H1 (cell line): ENCODE measurements at regions of chr2 and their contacts with region 1.

Region 1: DNA sequence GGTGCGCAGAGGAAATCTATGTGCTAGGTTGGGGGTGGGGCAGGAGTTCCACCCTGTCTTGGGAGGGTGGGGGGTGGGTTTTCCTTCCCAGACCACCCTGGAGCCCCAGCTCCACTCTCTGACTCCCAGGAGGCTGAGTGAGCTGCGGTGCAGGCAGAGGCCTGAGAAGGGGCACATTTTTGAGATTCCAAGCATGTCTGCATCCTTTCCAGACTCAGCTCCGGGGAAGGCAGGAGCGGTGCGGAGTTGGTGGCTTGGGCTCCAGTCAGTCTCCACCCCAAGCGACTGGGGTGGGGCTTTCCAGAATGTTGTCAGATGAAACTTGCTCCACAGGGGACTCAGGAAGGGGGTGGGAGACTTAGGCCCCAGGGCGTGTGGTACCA is 44.2 kb upstream of the HS6ST1 start:
- DNase-seq: peak; percentile 70 to 84
- H3K4me3 ChIP-seq: no peak overlapping the region; a peak in 1 of 8 replicates
- H3K27ac ChIP-seq: peak overlapping the region; percentile 85
- H3K4me1 ChIP-seq: peaks cover 6 to 25% (median 19%) of the 10 kb centered on the region in 4 experiments
- H3K27me3 ChIP-seq: no peaks in the 10 kb centered on the region; a peak in 1 of 7 replicates
- CTCF ChIP-seq: no peak
- EP300 ChIP-seq: peak in 1 of 2 experiments; percentile 94; a peak in 1 of 3 replicates
- POLR2A ChIP-seq: no peak; a peak in 1 of 3 replicates
- RAD21 ChIP-seq: peak; percentile 22 to 30

Region 2: GRCh38 chr2:128379021-128380015 is 16.5 kb after region 1 on chr2:
- CTCF ChIA-PET with region 1: interaction called, 8 read pairs
- POLR2A ChIA-PET with region 1: interaction called, 12 read pairs
- DNase-seq: no peak
- H3K4me3 ChIP-seq: no peak overlapping the region
- H3K27ac ChIP-seq: no peak overlapping the region
- H3K4me1 ChIP-seq: peaks cover 0 to 23% (median 7%) of the 10 kb centered on the region in 4 experiments; a peak in 4 of 7 replicates
- H3K27me3 ChIP-seq: peaks cover 0 to 5% (median 0%) of the 10 kb centered on the region in 4 experiments; a peak in 4 of 7 replicates
- CTCF ChIP-seq: no peak
- EP300 ChIP-seq: no peak
- POLR2A ChIP-seq: no peak
- RAD21 ChIP-seq: no peak